Left lung (tissue), 14 donors: ENCODE measurements at regions of chr18 and their contacts with region 1.

Region 1: GRCh38 chr18:7038330-7038851 is 79.2 kb downstream of the LAMA1 start:
- DNase-seq: peak; percentile 16 to 85 (median 76)
- ATAC-seq: peak; percentile 98
- H3K4me3 ChIP-seq: no peak overlapping the region
- H3K27ac ChIP-seq: peak overlapping the region; percentile 10 to 73
- H3K4me1 ChIP-seq: no peaks in the 10 kb centered on the region
- H3K27me3 ChIP-seq: no peaks in the 10 kb centered on the region
- CTCF ChIP-seq: peak; percentile 38 to 47

Region 2: DNA sequence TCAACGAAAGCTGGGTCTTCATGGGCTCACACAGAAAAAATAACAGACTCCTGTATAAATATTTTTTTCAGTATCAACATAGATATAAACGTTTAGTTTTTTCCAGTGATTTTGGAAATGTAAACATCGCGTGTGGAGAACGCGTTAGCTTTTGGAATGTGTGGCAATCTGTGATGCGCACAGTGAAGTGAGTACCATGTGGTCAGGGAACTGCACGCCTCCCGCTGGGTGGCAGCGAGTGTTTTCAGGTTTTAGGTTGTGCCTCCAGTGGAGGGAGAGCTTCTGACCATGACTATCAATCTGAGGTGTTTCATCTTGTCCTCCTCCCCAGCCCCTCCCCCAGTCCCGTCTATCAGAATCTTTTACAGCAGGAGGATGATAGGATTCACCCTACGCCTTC is 181.1 kb before region 1 on chr18:
- intact Hi-C with region 1: no loop called
- DNase-seq: no peak
- ATAC-seq: no peak
- H3K4me3 ChIP-seq: no peak overlapping the region
- H3K27ac ChIP-seq: no peak overlapping the region
- H3K4me1 ChIP-seq: no peaks in the 10 kb centered on the region
- H3K27me3 ChIP-seq: no peaks in the 10 kb centered on the region
- CTCF ChIP-seq: no peak

Region 3: DNA sequence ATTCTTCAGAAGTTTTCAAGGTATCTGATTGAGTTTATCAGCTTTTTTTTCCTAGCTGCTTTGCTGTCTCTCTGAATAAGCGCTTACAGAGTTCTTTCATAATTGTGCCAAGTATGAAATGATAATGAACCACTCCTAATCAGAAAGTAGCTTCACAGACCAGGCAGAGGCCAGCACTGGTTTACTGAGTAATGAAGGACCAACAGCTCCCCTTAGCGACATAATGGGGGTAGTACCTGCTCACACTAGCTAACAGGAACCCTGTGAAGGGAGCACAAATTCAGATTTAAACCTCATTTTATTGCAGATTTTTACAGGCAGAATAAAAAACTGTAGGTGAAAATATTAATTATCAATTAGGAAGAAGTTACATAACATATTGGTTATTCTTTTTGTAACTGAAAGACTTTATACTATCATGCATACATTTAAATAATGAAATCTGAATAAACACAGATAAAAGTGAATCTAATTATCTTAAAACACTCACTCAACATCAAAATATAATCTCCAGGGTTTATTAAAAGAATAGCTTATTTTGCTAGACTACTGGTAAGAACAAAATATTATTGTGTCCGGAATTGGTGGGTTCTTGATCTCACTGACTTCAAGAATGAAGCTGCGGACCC is 138.8 kb after region 1 on chr18:
- intact Hi-C with region 1: loop called in 1 of 2 experiments (anchors 10 kb)
- DNase-seq: peak in 2 of 4 donors; percentile 41 to 78
- ATAC-seq: peak; percentile 99
- H3K4me3 ChIP-seq: no peak overlapping the region
- H3K27ac ChIP-seq: no peak overlapping the region
- H3K4me1 ChIP-seq: peaks cover 0 to 5% of the 10 kb centered on the region in 2 donors
- H3K27me3 ChIP-seq: no peaks in the 10 kb centered on the region
- CTCF ChIP-seq: peak; percentile 59 to 65